HCT116 (cell line): ENCODE measurements at regions of chr20 and their contacts with region 1.

Region 1: GRCh38 chr20:40962730-40963504 is 65.7 kb upstream of the TOP1 start:
- DNase-seq: peak; percentile 51
- ATAC-seq: peak; percentile 93
- H3K4me3 ChIP-seq: peak overlapping the region in 1 of 2 experiments; percentile 32; a peak in 1 of 4 replicates
- H3K27ac ChIP-seq: no peak overlapping the region; the same call in 1 of the 2 replicates
- H3K4me1 ChIP-seq: peaks cover 0 to 9% of the 10 kb centered on the region in 2 experiments; a peak in 3 of 4 replicates
- H3K27me3 ChIP-seq: no peaks in the 10 kb centered on the region
- CTCF ChIP-seq: peak; percentile 67 to 89 (median 79)
- POLR2A ChIP-seq: no peak
- RAD21 ChIP-seq: peak; percentile 89

Region 2: DNA sequence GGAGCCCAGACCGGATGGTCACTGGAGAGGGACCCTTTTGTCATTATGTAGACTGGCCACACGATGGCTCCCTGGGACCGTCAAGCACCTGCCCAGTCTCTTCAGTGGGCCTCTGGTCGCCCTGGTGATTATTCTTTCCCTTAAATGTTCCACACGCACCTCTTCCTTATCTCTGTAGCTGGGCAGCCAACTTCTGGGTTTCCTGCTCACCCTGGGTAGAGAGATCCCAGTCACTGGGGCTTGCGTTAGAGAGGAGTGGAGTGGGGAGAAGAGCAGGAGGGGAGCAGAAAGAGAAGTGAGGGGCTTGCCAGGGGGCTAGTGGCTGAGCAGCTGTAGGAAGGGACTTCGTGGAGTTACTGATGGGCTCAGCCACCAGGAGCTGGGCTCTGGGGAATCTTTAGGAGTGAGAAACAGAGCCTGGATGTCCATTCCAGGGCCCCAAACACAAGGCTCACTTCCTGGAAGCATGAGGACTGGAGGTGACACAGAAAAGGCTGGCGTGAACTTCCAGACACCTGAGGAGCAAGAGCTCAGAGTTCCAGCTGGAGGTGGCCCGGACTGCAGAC is 1850.7 kb before region 1 on chr20:
- CTCF ChIA-PET with region 1: interaction called, 3 read pairs
- POLR2A ChIA-PET with region 1: no interaction called
- RAD21 ChIA-PET with region 1: no interaction called
- intact Hi-C with region 1: loop called (anchors 5 kb)
- DNase-seq: peak; percentile 50
- ATAC-seq: peak; percentile 76
- H3K4me3 ChIP-seq: no peak overlapping the region
- H3K27ac ChIP-seq: no peak overlapping the region
- H3K4me1 ChIP-seq: peaks cover 30 to 53% of the 10 kb centered on the region in 2 experiments
- H3K27me3 ChIP-seq: peaks cover 6% of the 10 kb centered on the region; the same call in 1 of the 2 replicates
- CTCF ChIP-seq: peak; percentile 57 to 81 (median 70)
- POLR2A ChIP-seq: no peak
- RAD21 ChIP-seq: peak; percentile 90

Region 3: DNA sequence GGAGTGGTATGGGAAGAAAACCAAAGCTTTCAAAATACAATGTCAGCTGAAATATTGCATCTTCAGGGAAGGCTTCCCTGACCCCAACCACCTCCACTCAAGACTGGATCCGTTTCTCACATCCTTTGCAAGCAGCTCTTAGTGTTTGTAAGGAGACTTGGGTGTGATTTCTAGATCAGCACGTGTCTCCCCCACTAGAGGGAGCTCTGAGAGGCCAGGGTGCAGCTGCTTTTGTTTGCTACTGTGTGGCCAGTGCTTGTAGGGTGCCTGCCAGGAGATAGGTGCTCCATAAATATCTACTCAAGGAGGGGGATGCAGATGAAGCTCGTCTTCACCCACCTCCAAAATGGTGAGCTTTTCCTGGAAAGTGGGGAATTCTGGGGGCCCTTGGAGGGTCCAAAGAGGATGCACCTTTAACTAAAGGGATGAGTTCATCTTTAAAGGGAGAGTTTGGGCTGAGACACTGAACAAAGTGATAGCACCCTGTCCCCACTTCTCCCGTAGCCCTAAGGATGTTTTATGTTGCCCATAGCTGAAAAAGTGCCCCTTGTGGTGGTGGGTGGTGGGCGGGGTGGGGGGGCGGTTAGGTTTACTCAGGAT is 221.3 kb before region 1 on chr20:
- CTCF ChIA-PET with region 1: interaction called, 29 read pairs
- POLR2A ChIA-PET with region 1: no interaction called
- RAD21 ChIA-PET with region 1: interaction called in 1 of 2 experiments, 4 read pairs
- intact Hi-C with region 1: loop called (anchors 1 kb)
- DNase-seq: peak; percentile 56
- ATAC-seq: peak; percentile 94
- H3K4me3 ChIP-seq: no peak overlapping the region
- H3K27ac ChIP-seq: no peak overlapping the region
- H3K4me1 ChIP-seq: no peaks in the 10 kb centered on the region
- H3K27me3 ChIP-seq: peaks cover 38% of the 10 kb centered on the region
- CTCF ChIP-seq: peak; percentile 61 to 92 (median 90)
- POLR2A ChIP-seq: no peak
- RAD21 ChIP-seq: peak; percentile 65

Region 4: DNA sequence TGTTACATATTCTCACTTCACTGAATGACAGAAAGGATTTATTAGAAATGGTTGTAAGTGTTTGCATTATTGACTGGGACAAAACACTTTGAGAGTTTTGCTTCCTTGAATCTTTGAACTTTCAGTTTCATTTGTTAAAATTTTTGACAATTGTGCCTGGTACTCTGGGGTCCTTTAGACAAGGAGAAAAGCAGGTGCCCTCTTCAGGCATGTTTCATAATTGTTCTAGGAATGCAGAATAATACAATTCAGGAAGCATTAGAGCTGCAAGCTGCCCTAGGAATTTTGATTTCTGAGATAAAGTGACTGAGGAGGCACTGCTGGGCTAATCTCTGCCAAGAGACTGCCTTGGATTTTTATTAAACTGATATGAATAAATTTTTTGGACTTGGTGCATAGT is 115.4 kb after region 1 on chr20:
- CTCF ChIA-PET with region 1: no interaction called
- POLR2A ChIA-PET with region 1: no interaction called
- RAD21 ChIA-PET with region 1: no interaction called
- intact Hi-C with region 1: loop called (anchors 5 kb)
- DNase-seq: no peak
- ATAC-seq: peak; percentile 68
- H3K4me3 ChIP-seq: no peak overlapping the region
- H3K27ac ChIP-seq: no peak overlapping the region
- H3K4me1 ChIP-seq: peaks cover 0 to 7% of the 10 kb centered on the region in 2 experiments; a peak in 1 of 4 replicates
- H3K27me3 ChIP-seq: no peaks in the 10 kb centered on the region
- CTCF ChIP-seq: peak; percentile 43 to 58 (median 52); a peak in 5 of 6 replicates
- POLR2A ChIP-seq: no peak
- RAD21 ChIP-seq: peak; percentile 63

Region 5: GRCh38 chr20:41232973-41233926 is 270.3 kb after region 1 on chr20:
- CTCF ChIA-PET with region 1: interaction called, 6 read pairs
- POLR2A ChIA-PET with region 1: no interaction called
- RAD21 ChIA-PET with region 1: no interaction called
- intact Hi-C with region 1: loop called (anchors 1 kb)
- DNase-seq: no peak
- ATAC-seq: peak; percentile 31
- H3K4me3 ChIP-seq: peak overlapping the region in 1 of 2 experiments; percentile 17; a peak in 1 of 4 replicates
- H3K27ac ChIP-seq: no peak overlapping the region
- H3K4me1 ChIP-seq: peaks cover 7 to 19% of the 10 kb centered on the region in 2 experiments
- H3K27me3 ChIP-seq: no peaks in the 10 kb centered on the region
- CTCF ChIP-seq: no peak
- POLR2A ChIP-seq: no peak
- RAD21 ChIP-seq: no peak